ENCODE measurements at regions of chr6 and their contacts with region 1.

Region 1: DNA sequence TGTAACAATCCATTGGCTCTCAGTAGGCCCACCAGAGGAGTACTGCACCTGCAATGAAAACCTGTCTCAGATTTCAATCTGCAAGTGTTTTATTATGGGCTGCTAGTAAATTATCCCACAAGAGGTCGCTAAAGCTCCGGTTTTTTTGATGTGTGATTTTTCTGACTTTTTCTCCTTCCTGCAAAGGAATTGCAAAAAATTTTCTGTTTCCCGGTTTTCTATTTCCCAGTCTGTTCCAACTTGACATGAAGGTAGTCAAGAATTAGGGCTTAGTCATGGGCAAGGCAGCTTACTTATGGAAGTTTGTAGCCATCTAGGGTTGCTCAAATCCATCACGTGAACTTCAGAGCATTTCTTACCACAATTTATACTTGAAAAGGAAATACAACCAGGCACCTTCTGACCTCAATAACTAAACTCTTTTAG is 38.5 kb upstream of the AHI1 start:
- DNase-seq: no peak

Region 2: DNA sequence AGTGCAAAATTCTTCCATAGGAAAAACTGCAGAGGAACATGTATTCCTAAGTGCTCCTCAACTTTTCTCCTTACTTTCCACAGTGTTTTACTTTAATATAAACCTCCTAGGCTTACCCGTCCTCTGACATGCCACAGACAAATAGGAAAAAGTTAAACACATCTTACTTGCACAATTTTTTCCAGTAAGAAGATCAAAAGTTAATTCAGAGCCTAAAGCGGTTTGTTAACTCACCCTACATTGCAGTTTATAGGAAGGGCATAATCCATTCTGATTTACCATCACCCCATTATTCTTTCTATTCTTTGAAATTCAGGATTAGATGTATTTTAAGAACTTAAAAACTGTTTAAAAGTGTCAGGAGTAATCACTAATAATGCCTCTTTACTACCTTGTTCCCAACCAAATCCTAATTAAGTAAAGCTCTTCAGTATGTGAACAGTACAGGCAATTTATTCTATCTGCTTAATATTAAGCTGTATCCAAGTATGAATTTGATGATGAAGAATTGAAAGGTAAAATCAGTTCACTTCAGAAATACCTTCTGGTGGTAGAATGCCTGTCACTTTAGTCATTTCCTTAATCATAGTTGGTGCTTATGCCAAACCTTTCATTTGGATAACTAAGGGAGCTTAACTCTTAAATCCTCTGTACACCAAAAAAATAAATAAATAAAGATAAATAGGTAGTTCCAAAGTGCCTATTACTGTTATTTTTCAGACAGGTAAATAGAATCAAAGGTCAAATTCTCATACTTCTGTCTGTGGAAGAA is 878.1 kb before region 1 on chr6:
- intact Hi-C with region 1: no loop called
- DNase-seq: no peak

Region 3: DNA sequence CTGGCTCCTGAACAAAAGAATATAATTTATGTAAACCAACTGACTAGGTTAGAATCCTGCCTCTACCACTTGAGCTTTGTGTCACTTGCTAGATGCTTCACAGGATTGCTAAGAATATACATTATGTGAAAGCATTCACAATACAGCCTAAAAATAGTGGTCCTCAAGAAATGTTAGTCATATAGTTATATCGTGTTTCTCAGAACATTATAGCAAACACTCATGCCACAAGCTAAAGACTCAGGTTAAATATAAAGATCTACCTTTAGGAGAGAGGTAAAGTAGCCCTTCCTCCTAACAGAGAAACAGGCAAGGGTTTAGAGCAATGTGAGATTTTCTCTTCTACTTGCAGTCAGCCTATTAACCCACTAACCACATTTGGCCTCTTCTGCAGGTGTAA is 568.3 kb before region 1 on chr6:
- intact Hi-C with region 1: no loop called
- DNase-seq: no peak

Region 4: DNA sequence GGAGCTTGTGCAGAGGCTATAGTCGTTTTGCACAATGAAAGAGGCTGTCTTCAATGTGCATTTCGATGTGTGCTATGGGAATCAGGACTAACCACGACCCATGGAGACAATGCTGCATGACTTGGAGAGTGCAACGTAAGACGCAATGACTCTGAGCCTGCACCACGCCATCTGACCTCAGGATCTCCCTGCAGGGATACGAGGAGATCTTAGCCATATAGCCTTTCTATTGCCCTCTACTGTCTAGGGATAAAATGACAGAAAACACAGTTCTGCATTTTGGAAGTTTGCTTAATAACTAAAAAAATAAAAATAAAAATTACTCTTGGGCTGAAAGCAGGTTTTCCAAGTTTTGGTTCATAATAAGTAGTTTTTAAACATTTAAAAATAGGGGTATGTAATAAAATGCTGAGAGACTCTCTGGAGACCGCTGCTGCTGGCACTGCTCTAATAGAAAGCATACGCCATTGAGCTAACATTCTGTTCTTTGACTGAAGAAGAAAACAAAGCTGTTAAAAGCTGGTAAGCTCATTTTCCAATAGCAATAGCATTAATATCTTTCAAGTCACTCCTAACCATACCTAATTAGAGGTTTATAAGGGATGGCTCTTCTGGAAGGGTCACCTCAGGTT is 402.7 kb after region 1 on chr6:
- intact Hi-C with region 1: loop called (anchors 10 kb)
- DNase-seq: no peak